PC-3 (cell line): ENCODE measurements at regions of chr3 and their contacts with region 1.

Region 1: GRCh38 chr3:42600111-42600988 is at the start of gene NKTR:
- DNase-seq: peak; percentile 100
- ATAC-seq: peak; percentile 85
- H3K4me3 ChIP-seq: peak within 1 kb of the TSS; percentile 83
- H3K27ac ChIP-seq: peak within 1 kb of the TSS; percentile 79
- H3K4me1 ChIP-seq: peaks cover 14% of the 10 kb centered on the region
- H3K27me3 ChIP-seq: no peaks in the 10 kb centered on the region
- CTCF ChIP-seq: no peak
- total RNA-seq, gene NKTR: 35.3 and 37.6 TPM in 2 replicates

Region 2: DNA sequence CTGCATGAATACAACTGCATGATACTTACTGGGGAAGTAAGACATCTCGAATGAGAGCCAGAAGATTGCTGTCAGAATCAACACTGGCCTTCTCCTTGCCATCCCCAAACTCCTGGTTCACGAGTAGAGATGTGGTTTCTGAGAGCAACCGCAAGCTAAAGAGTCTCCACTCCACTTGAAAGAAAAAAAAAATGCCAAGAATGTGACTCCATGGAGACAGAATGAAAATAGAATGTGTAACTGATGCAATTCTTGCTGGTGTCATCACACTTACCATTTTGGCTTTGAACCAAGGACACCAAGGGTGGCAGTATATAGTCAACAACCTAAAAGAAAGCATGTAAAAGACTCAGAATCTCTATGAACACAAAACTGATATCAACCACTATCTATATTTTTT is 918.9 kb before region 1 on chr3:
- CTCF ChIA-PET with region 1: no interaction called
- POLR2A ChIA-PET with region 1: interaction called, 12 read pairs
- intact Hi-C with region 1: no loop called
- DNase-seq: peak; percentile 73
- ATAC-seq: no peak
- H3K4me3 ChIP-seq: no peak overlapping the region
- H3K27ac ChIP-seq: peak overlapping the region; percentile 49
- H3K4me1 ChIP-seq: peaks cover 24% of the 10 kb centered on the region
- H3K27me3 ChIP-seq: no peaks in the 10 kb centered on the region
- CTCF ChIP-seq: no peak

Region 3: DNA sequence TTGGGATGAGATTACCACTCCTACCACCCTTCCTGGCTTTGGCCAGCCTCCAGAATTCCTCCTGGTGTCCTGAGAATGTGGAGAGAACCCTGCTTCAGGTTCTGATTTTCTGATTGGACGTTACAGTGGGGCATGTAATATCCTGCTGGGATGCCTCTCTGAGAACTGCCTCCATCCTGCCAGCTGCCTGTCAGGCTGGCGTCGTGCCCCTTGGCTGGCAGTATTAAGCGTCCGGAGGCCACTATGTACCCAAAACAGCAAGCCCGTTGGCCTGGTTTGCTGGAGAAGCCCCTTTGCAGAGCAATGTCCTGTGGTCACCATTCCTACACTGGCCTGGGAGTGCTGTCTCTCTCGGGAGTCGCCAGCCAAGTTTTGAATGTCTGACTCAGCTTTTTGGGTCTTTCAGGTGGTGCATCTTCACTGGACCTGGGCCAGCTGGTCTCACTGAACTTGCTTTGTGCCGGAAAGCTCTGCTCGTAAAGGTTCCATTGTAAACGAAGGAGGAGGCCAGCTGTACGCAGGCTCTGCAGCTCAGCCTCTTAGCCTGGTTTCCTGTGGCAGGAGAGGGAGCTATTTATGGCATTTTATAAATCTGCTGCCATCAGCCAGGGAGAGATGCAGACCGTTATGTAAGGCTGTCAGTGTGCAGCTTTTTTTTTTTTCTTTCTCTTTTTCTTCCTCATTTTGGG is 528.3 kb before region 1 on chr3:
- CTCF ChIA-PET with region 1: no interaction called
- POLR2A ChIA-PET with region 1: interaction called, 18 read pairs
- intact Hi-C with region 1: no loop called
- DNase-seq: peak; percentile 97
- ATAC-seq: peak; percentile 94
- H3K4me3 ChIP-seq: peak overlapping the region; percentile 46
- H3K27ac ChIP-seq: peak overlapping the region; percentile 74
- H3K4me1 ChIP-seq: peaks cover 29% of the 10 kb centered on the region
- H3K27me3 ChIP-seq: no peaks in the 10 kb centered on the region
- CTCF ChIP-seq: 0 out of 2 replicates have a peak, but pooled peaks have one; percentile 16

Region 4: GRCh38 chr3:42581709-42582473 is 18.5 kb before region 1 on chr3 and contains the start of gene SEC22C:
- CTCF ChIA-PET with region 1: interaction called, 3 read pairs
- POLR2A ChIA-PET with region 1: interaction called, 9 read pairs
- intact Hi-C with region 1: loop called (anchors 1 kb)
- DNase-seq: peak; percentile 96
- ATAC-seq: peak; percentile 94
- H3K4me3 ChIP-seq: peak within 1 kb of the TSS; percentile 92
- H3K27ac ChIP-seq: peak within 1 kb of the TSS; percentile 76
- H3K4me1 ChIP-seq: peaks cover 26% of the 10 kb centered on the region
- H3K27me3 ChIP-seq: no peaks in the 10 kb centered on the region
- CTCF ChIP-seq: peak; percentile 44; the same call in 1 of the 2 replicates
- total RNA-seq, gene SEC22C: 43.2 and 63.3 TPM in 2 replicates

Region 5: DNA sequence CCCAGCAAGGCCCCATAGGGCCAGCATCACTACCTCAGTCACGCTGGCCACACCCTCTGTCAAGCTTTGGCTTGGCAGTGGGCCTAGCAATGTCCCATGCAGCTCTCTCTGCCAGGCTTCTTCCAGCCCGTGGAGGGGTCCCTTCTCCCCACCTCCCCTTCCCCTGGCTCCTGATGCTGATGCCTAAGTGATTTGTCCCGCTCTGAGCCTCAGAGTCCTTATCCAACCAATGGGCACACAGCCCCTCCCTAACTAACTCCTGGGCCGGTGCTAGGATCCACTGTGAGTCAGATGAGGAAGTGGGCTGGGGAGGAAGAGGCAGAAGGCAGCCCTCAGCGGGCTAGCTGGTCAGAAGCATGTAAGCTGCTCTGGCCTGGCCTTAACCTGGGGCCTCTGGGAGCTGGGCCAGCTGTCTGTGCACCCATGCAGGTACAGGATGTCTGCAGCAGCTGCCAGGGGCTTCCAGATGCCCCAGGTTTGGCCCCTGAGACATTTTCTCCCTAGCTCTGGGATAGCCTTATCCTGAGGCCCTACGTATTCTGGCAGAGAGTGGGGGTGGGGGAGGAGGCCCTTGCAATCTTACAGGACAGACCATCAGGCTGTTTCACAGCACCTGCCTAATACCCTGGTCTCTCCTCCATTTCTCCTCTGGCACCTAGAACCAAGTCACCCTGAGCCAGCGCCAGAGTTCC is 52.4 kb after region 1 on chr3:
- CTCF ChIA-PET with region 1: no interaction called
- POLR2A ChIA-PET with region 1: interaction called, 20 read pairs
- intact Hi-C with region 1: loop called (anchors 2 kb)
- DNase-seq: peak; percentile 90
- ATAC-seq: peak; percentile 75
- H3K4me3 ChIP-seq: peak overlapping the region; percentile 85
- H3K27ac ChIP-seq: peak overlapping the region; percentile 53
- H3K4me1 ChIP-seq: peaks cover 28% of the 10 kb centered on the region
- H3K27me3 ChIP-seq: no peaks in the 10 kb centered on the region
- CTCF ChIP-seq: no peak

Region 6: DNA sequence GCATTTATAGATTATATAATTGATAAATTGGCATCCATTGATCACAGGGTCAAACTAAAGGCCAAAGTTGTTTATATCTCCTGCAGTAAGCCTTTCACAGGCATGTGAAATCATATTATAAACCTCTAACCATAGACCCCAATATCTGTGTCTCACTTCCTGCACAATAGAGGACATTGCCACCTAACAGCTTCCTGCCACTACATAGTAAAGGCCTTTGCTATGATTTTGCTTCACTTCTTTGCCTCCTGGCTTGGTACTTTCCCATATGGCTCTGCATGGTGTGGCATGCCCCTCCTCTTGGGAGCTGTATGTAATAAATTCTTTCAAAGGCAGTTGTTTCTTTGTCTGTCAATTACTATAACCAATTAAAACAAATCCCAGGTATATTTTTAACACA is 326.0 kb after region 1 on chr3:
- CTCF ChIA-PET with region 1: no interaction called
- POLR2A ChIA-PET with region 1: no interaction called
- intact Hi-C with region 1: no loop called
- DNase-seq: no peak
- ATAC-seq: no peak
- H3K4me3 ChIP-seq: no peak overlapping the region
- H3K27ac ChIP-seq: no peak overlapping the region
- H3K4me1 ChIP-seq: no peaks in the 10 kb centered on the region
- H3K27me3 ChIP-seq: no peaks in the 10 kb centered on the region
- CTCF ChIP-seq: no peak